Caco-2 (cell line): ENCODE measurements at regions of chr2 and their contacts with region 1.

Region 1: DNA sequence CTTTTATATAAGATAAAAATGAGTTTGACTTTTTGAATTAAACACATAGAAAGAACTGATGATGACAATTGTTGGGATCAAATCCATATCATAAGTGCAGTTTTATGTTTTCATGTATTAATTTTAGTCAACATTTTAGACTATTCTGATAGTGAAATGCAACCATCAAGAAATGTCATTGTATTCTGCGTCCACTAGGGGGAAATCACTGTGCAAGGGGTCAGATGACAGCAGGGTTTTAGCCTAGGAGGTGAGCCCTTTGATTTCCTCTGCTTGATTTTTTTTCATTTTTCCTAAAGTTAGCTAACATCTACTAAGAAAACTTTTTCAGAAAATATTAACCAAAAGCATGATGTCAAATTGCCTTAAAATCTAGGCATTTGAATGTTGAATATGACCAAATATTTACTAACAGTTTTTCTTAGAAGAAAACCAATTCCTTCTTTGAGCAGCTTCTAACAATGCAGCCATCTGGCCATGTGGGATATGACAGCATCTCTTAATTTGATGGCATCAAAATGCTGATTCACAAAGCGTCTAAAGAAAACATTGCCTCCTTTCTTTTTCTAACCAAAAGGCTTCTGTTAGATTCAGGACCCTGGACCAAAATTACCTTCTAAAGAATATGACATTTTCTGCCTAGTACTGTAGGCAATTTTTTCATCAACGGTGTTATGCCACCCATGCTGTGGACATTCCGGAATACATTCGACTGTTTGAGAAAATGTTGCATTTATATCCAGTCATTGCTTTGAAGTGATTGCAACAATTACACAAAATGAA is 141.5 kb downstream of the SPHKAP start:
- DNase-seq: peak in 1 of 2 experiments; percentile 11
- H3K4me3 ChIP-seq: no peak overlapping the region
- H3K4me3 Mint-ChIP-seq: no peak overlapping the region
- H3K27ac Mint-ChIP-seq: no peak overlapping the region
- H3K4me1 ChIP-seq: no peaks in the 10 kb centered on the region
- H3K4me1 Mint-ChIP-seq: no peaks in the 10 kb centered on the region
- H3K27me3 ChIP-seq: no peaks in the 10 kb centered on the region
- H3K27me3 Mint-ChIP-seq: peaks cover 6% of the 10 kb centered on the region
- CTCF ChIP-seq: peak; percentile 42 to 63

Region 2: DNA sequence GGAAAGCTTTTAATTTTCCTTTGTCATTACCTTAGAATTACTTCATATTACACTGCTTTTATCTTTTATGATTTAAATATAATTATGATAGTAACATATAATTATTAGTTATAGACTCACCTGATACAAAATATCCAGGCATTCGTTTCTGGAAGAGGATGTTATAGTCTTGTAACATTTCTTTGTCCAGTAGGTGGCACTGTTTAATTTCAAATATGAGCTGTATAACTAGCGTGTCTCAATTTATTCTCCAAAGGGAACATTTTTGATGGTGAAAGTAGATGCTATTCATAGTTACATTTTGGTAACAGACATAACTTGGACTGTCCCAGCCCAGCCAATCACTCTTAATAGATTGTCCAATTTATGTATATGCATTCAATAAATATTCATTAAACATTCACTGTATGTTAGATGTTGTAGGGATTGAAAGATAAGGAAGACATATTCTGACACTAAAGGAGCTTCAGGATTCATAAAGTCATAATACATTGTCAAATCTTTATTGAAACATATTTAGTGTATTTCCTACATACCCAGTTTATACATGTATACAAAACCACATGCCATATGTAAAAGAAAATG is 149.4 kb before region 1 on chr2:
- CTCF ChIA-PET with region 1: no interaction called
- POLR2A ChIA-PET with region 1: no interaction called
- intact Hi-C with region 1: loop called (anchors 1 kb)
- DNase-seq: peak in 1 of 2 experiments; percentile 41
- H3K4me3 ChIP-seq: no peak overlapping the region
- H3K4me3 Mint-ChIP-seq: no peak overlapping the region
- H3K27ac Mint-ChIP-seq: no peak overlapping the region
- H3K4me1 ChIP-seq: no peaks in the 10 kb centered on the region
- H3K4me1 Mint-ChIP-seq: no peaks in the 10 kb centered on the region
- H3K27me3 ChIP-seq: no peaks in the 10 kb centered on the region
- H3K27me3 Mint-ChIP-seq: no peaks in the 10 kb centered on the region
- CTCF ChIP-seq: peak; percentile 38 to 64

Region 3: DNA sequence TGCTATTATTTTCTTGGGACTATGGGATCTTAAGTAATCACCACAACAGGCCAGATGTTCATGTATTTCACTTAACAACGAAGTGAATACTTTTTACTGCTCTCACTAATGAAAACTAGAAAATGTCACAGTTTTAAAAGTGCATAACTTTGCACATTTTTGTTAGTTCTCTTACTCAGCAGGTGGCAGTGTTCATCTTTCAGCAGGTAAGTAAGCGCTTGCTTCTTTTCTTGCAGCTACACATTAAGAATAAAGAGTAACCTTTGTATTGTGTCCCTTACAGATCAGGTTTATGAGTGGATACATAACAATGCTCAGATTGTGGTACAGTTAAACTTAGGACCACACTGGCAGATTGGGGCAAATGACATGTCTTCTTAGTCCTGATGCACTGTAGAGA is 107.5 kb before region 1 on chr2:
- CTCF ChIA-PET with region 1: no interaction called
- POLR2A ChIA-PET with region 1: no interaction called
- intact Hi-C with region 1: loop called (anchors 5 kb)
- DNase-seq: no peak
- H3K4me3 ChIP-seq: no peak overlapping the region
- H3K4me3 Mint-ChIP-seq: no peak overlapping the region
- H3K27ac Mint-ChIP-seq: no peak overlapping the region
- H3K4me1 ChIP-seq: no peaks in the 10 kb centered on the region
- H3K4me1 Mint-ChIP-seq: peaks cover 7% of the 10 kb centered on the region
- H3K27me3 ChIP-seq: no peaks in the 10 kb centered on the region
- H3K27me3 Mint-ChIP-seq: no peaks in the 10 kb centered on the region
- CTCF ChIP-seq: peak; percentile 9 to 19

Region 4: DNA sequence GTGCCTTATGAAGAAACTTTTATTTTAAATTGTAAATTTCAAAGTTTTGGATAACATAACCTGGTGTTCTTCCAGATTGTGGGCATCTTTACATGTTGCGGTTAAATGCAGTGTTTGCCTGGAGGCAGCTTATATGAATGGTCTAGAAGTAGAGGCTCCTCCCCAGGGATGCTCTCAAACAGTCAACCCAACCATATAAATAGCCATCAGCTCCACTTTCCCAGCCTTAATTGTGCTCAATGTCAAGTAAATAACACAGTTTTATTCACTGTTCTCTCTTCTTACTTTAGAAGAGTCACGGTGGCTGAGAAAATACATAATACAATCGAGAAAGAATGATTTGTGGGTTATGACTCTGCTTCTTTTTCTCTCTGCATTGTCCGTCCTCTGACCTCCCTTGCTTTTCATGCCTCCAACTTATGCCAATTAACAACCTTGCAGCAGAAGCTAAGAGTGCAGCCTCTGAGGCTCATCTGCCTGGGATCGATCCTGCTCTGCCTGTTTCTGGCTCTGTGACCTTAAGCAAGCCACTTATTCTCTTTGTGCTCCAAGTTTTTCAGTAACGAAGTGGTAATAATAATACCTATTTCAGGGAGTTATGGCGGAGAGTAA is 68.2 kb before region 1 on chr2:
- CTCF ChIA-PET with region 1: no interaction called
- POLR2A ChIA-PET with region 1: no interaction called
- intact Hi-C with region 1: no loop called
- DNase-seq: no peak
- H3K4me3 ChIP-seq: no peak overlapping the region
- H3K4me3 Mint-ChIP-seq: no peak overlapping the region
- H3K27ac Mint-ChIP-seq: no peak overlapping the region
- H3K4me1 ChIP-seq: no peaks in the 10 kb centered on the region
- H3K4me1 Mint-ChIP-seq: no peaks in the 10 kb centered on the region
- H3K27me3 ChIP-seq: no peaks in the 10 kb centered on the region
- H3K27me3 Mint-ChIP-seq: peaks cover 13% of the 10 kb centered on the region
- CTCF ChIP-seq: no peak